Naive thymus-derived CD4-positive, alpha-beta T cell (primary cell): ENCODE measurements at regions of chrX and their contacts with region 1.

Region 1: GRCh38 chrX:49163555-49164419 is 1.2 kb downstream of the MAGIX start:
- DNase-seq: peak; percentile 71 to 84 (median 80)
- ATAC-seq: peak; percentile 74
- H3K4me3 ChIP-seq: peak overlapping the region; percentile 50
- H3K4me3 Mint-ChIP-seq: peak overlapping the region; percentile 72 to 84 (median 81)
- H3K27ac ChIP-seq: peak overlapping the region; percentile 74
- H3K27ac Mint-ChIP-seq: peak overlapping the region; percentile 79 to 97 (median 92)
- H3K4me1 ChIP-seq: peaks cover 14 to 16% of the 10 kb centered on the region in 2 donors
- H3K4me1 Mint-ChIP-seq: peaks cover 13 to 33% (median 26%) of the 10 kb centered on the region in 7 donors
- H3K27me3 ChIP-seq: no peaks in the 10 kb centered on the region
- H3K27me3 Mint-ChIP-seq: peaks cover 0 to under 1% (median 0%) of the 10 kb centered on the region in 5 donors

Region 2: DNA sequence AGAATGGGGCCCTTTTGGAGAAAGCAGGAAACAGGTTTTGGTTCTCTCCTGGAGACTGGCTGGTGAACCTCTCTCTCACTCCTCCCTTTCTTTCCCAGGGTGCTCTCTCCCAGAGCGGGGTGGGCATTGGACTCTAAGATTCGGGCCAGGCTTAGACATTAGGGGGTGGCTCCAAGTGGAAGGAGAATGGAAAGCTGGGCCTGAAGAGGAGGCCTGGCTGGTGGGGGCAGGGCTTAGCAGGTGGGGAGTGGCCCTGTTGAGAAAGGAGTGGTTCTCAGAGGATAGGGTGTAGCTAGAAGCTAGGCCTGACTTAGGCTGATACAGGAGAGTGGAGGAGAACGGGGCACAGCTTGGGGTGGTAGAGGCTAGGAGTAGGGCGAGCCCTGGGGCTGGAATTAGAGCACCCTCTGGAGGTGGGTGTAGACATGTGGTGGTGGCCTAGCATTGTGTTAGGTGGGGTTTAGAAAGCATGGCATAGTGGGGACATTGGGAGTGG is 13.6 kb after region 1 on chrX:
- CTCF ChIA-PET with region 1: interaction called, 3 read pairs
- POLR2A ChIA-PET with region 1: interaction called, 3 read pairs
- intact Hi-C with region 1: loop called in 1 of 2 experiments (anchors 1 kb)
- DNase-seq: peak in 1 of 9 donors; percentile 8
- ATAC-seq: peak; percentile 77
- H3K4me3 ChIP-seq: no peak overlapping the region
- H3K4me3 Mint-ChIP-seq: no peak overlapping the region
- H3K27ac ChIP-seq: no peak overlapping the region
- H3K27ac Mint-ChIP-seq: peak overlapping the region in 5 of 9 donors; percentile 14 to 66 (median 54)
- H3K4me1 ChIP-seq: peaks cover 0 to 9% of the 10 kb centered on the region in 2 donors
- H3K4me1 Mint-ChIP-seq: peaks cover 7 to 39% (median 15%) of the 10 kb centered on the region in 7 donors
- H3K27me3 ChIP-seq: no peaks in the 10 kb centered on the region
- H3K27me3 Mint-ChIP-seq: no peaks in the 10 kb centered on the region

Region 3: DNA sequence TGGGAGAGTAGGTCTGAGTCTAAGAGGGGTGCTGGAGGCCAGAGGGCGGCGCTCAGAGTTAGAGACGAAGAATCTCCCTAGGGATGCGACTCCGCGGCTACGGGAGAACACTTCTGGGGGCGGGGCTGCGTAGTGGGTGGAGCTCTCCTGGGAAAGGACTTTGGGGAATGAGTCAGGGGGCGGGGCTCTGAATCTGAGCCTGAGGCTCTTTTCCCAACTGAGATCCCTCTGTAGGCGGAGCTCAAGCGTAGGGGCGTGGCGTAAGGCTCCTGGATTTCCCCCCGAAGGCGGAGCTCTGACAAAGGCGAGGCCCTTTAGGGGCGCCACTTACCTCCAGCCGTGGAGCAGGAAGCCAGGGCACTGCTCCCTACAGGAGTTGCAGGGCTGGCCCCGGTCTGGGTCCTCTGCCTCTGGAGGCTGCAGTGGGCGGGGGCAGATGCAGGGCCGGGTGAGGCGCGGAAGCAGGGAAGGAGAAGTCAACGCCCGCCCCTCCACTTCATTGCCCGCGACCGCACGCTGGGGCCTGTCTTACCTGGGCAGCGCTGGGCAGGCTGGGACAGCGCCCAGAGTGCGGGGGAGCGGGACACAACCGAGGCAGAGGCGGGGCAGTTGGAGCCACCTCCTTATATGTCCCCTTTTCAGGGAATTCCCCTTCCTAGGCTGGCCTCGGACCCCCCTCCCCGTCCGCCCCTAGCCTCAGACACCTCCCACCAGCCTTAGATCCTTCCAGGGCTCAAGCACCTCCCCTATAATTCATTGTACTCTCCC is 20.7 kb after region 1 on chrX:
- CTCF ChIA-PET with region 1: interaction called, 4 read pairs
- POLR2A ChIA-PET with region 1: interaction called, 4 read pairs
- intact Hi-C with region 1: loop called (anchors 1 kb)
- DNase-seq: peak in 2 of 9 donors; percentile 24 to 46
- ATAC-seq: peak; percentile 49
- H3K4me3 ChIP-seq: peak overlapping the region; percentile 24
- H3K4me3 Mint-ChIP-seq: peak overlapping the region; percentile 73 to 93 (median 82)
- H3K27ac ChIP-seq: peak overlapping the region; percentile 55
- H3K27ac Mint-ChIP-seq: peak overlapping the region in 8 of 9 donors; percentile 24 to 83 (median 48)
- H3K4me1 ChIP-seq: peaks cover 4 to 8% of the 10 kb centered on the region in 2 donors
- H3K4me1 Mint-ChIP-seq: peaks cover 0 to 29% (median 12%) of the 10 kb centered on the region in 7 donors
- H3K27me3 ChIP-seq: no peaks in the 10 kb centered on the region
- H3K27me3 Mint-ChIP-seq: no peaks in the 10 kb centered on the region